Posterior cingulate gyrus (tissue), 11 donors: ENCODE measurements at regions of chr11 and their contacts with region 1.

Region 1: GRCh38 chr11:19553683-19554333 is 158.8 kb upstream of the NAV2 start:
- DNase-seq: peak; percentile 78 to 98 (median 92)

Region 2: GRCh38 chr11:19071255-19071654 is 482.6 kb before region 1 on chr11:
- intact Hi-C with region 1: loop called (anchors 2 kb)
- DNase-seq: peak; percentile 25 to 94 (median 58)

Region 3: DNA sequence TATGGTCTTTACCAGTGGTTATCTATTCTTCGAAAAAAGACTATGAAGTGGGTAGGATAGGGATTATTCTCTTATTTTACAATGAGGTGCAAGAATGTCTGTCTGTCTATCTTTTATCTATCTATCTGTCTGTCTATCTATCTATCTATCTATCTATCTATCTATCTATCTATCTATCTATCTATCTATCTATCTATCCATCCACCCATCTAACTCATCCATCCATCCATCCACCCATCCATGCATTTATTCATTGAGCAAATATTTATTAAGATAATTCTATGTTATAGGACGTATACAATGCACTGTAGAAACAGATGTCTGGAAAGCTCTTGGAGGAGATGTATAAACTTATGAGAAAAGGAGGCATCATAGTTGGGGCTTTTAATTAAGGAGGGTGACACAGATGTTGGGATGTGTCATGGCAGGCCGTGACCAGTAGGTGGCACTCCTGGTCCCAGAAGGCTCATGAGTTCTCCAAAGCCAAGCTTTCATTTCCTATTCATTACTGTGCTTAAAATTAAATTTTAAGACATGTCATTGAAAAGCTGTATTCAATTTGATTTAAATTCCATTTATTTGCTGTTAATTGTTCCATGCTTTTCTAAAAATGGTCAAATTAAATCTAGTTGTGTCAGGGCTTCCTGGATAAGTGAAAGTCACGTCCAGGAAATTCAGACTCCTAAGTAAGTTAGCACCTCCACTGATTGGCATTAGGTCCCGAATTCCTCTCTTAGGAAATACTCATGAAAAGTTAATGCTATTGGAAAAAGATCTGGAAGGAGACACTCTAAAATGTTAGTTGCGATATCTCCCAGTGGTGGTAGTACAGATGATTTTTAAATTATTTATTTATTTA is 294.1 kb before region 1 on chr11:
- intact Hi-C with region 1: loop called (anchors 1 kb)
- DNase-seq: peak; percentile 56 to 95 (median 80)

Region 4: GRCh38 chr11:19326499-19326898 is 227.3 kb before region 1 on chr11:
- intact Hi-C with region 1: loop called (anchors 5 kb)
- DNase-seq: no peak

Region 5: GRCh38 chr11:19482319-19483100 is 71.3 kb before region 1 on chr11:
- intact Hi-C with region 1: no loop called
- DNase-seq: no peak

Region 6: DNA sequence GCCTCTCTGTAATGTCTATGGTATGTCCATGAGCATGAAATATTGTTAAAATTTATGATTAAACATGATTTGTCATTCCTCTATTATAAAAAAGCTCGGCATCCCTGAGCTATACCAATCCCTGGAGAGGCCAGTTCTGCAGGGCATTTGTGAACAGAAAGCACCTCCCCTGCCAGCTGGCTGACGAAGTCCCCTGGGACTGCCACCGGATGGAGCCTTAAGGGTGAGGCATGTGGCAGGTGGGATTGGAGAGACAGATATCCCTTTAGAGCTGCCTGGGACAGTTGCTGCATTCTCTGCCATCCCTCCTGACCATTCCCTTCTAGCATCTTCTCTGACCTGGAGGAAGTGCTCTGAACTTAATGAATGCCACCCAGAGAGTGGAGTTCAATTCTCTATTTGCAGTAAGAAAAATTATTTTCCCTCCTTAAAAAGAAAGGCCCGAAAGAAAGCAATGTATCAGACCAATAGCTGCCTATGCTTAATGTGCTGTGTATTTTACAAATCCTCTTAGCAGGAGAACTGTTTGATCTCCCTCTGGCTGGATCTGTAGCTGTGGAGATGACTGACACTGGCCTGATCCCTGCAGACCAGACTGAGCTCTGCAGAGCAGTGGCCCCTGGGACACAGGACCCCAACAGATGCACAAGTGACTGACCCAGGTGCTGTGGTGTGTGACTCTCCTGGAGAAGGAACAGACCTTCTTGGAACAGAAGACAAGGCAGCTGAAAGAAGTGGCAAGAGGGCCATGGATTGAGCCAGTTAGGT is 60.2 kb before region 1 on chr11:
- intact Hi-C with region 1: no loop called
- DNase-seq: no peak

Region 7: GRCh38 chr11:19808076-19808911 is 254.5 kb after region 1 on chr11:
- intact Hi-C with region 1: no loop called
- DNase-seq: no peak

Region 8: DNA sequence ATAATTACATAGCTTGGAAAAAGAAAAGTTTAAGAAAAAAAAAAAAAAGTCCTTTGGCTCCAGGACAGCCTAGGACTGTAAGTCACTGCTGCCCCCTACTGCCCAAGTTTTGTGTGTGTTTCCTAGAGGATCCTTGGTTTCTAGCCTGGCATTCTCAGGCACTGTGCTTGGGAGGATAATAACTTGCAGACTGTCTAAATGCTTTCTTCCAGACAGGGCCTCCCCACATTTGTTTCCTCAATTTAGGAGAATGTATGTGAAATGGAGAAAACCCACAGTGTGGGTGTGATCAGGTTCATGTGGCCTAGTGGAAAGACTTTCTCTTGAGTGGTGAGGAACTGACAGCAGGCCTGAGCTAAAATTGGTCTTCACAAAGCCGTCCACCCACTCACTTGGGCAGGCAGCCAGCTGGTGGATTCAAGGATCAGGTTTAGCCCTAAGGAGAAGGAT is 349.8 kb after region 1 on chr11:
- intact Hi-C with region 1: loop called (anchors 2 kb)
- DNase-seq: peak; percentile 50 to 94 (median 77)